BJ (cell line): ENCODE measurements at regions of chr12 and their contacts with region 1.

Region 1: DNA sequence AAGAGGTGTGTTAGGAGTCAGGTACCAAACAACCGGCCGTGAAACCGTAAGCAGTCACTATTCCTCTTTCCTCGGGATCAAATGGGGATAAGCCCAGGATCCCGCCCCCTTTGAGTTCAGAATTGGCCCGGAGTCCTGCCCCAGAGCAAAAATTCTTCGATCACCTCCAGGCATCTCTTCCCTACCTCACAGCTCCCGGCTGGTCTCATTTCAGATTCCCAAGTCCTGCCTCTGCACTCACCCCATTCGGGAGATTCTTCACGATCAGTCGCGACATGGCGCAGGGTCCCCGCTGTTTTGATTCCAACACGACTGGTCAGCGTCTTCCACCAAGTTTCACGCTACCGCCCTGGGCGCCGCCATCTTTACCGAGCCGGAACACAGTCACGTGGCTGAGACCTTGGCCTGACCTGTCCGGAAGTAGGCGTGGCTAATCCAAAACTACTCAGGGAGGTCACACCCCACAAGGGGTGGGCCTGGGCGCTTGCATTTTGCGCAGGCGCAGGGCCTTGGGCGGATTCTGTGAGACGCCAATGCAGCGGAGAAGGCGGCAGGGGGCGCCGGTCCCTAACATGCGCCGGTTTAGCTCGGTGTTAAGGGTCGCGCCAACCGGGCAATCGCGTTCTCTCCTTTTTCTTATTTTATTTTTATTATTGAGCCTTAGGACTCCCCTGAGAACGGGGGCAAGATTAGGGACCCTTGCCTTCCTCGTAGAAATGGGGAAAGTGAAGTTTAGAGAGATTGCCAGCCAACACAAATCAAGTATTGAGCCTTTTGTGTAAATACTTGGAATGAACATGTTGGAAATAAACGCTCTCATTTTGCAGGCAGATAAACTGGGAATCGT is at the start of gene RBM19:
- DNase-seq: peak; percentile 78
- H3K4me3 ChIP-seq: peak within 1 kb of the TSS; percentile 66
- H3K27me3 ChIP-seq: peaks cover 5% of the 10 kb centered on the region
- CTCF ChIP-seq: peak; percentile 99
- polyA plus RNA-seq, gene RBM19: 12.7 and 15.5 TPM in 2 replicates

Region 2: GRCh38 chr12:113949321-113950305 is 16.6 kb before region 1 on chr12:
- CTCF ChIA-PET with region 1: no interaction called
- POLR2A ChIA-PET with region 1: no interaction called
- DNase-seq: no peak
- H3K4me3 ChIP-seq: no peak overlapping the region
- H3K27me3 ChIP-seq: no peaks in the 10 kb centered on the region
- CTCF ChIP-seq: no peak

Region 3: DNA sequence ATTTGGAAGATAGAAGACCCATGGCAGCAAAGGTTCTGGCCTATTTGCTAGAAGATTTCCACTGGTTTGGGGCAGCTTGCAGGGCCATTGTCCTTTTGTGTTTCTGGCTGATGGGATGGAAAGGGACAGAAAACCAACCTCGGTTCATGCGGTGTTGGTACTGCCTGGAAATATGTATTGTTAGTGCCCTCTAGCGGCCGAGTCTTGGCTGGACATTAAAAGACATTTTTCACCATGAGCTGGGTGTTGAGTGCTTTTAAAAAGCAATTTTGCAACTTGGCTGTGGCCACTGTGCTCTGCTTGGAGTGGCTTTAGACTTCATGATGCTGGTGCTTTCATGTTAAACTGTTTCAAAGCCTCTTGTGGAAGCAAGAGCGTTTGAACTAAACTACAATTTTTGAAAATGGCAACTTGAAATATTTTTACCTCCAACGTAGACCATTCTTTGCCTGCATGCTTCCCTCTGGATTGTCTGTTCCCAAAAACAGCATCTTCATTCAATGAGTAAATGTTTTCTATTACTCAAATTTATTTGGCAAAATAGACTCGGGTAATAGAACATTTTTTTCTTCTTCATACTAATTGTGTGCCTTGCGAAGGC is 542.5 kb after region 1 on chr12:
- CTCF ChIA-PET with region 1: interaction called, 19 read pairs
- POLR2A ChIA-PET with region 1: no interaction called
- DNase-seq: peak; percentile 24
- H3K4me3 ChIP-seq: no peak overlapping the region
- H3K27me3 ChIP-seq: no peaks in the 10 kb centered on the region
- CTCF ChIP-seq: peak; percentile 76